ENCODE measurements at regions of chr9 and their contacts with region 1.

Region 1: GRCh38 chr9:38445154-38446043 is 21.1 kb upstream of the IGFBPL1 start:
- DNase-seq: peak in 1 of 2 donors; percentile 79
- H3K4me3 ChIP-seq: no peak overlapping the region
- H3K27ac ChIP-seq: no peak overlapping the region
- H3K4me1 ChIP-seq: no peaks in the 10 kb centered on the region
- H3K27me3 ChIP-seq: no peaks in the 10 kb centered on the region
- CTCF ChIP-seq: no peak
- POLR2A ChIP-seq: no peak

Region 2: DNA sequence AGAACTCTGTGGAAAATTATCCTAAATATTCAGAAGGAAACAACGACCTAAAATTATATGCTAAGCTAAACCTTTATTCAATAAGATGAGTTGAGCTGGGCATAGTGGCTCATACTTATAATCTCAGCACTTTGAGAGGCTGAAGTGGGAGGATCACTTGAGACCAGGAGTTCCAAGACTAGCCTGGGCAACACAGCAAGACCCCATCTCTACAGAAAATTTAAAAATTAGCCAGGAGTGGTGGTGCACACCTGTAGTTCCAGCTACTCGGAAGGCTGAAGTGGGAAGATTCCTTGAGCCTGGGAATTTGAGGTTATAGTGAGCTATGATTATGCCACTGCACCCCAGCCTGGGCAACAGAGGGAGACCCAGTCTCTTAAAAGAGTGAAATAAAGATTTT is 593.2 kb before region 1 on chr9:
- intact Hi-C with region 1: no loop called
- DNase-seq: no peak
- H3K4me3 ChIP-seq: no peak overlapping the region
- H3K27ac ChIP-seq: no peak overlapping the region
- H3K4me1 ChIP-seq: no peaks in the 10 kb centered on the region
- H3K27me3 ChIP-seq: no peaks in the 10 kb centered on the region
- CTCF ChIP-seq: no peak
- POLR2A ChIP-seq: no peak

Region 3: GRCh38 chr9:38008168-38009034 is 437.0 kb before region 1 on chr9:
- intact Hi-C with region 1: no loop called
- DNase-seq: no peak
- H3K4me3 ChIP-seq: no peak overlapping the region
- H3K27ac ChIP-seq: no peak overlapping the region
- H3K4me1 ChIP-seq: peaks cover 43% of the 10 kb centered on the region
- H3K27me3 ChIP-seq: no peaks in the 10 kb centered on the region
- CTCF ChIP-seq: no peak
- POLR2A ChIP-seq: no peak

Region 4: DNA sequence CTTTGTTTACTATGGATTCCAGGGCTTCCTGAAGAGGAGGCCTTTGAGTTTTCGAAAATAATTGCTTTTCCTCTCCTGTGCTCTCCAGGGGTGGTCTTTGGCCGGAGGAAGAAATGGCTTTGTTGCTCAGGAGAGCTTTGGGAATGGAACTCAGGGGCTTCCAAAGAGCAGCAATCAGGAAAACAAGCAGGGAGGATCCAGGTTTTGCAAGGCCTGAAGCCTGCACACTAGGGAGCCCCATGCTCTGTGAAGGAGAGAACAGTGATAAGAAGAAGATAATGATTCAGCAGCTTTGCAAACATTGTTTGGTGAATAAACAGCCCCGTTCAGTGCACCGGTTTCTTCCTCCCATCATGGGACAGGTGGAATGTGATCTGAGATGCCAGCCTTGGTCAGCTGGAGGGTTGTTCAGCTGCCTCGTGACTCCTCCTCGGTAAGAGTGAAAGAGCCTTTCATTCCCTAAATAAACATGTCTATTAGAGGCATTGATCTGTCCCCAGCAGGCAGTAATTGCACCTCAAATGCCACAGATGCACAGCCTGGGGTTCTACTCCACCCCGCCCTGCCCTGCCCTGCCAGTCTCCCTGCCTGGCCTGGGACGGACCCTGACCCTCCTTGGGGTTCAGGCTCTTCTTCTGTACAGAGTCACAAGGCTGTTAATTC is 64.4 kb before region 1 on chr9:
- intact Hi-C with region 1: no loop called
- DNase-seq: no peak
- H3K4me3 ChIP-seq: no peak overlapping the region
- H3K27ac ChIP-seq: no peak overlapping the region
- H3K4me1 ChIP-seq: no peaks in the 10 kb centered on the region
- H3K27me3 ChIP-seq: no peaks in the 10 kb centered on the region
- CTCF ChIP-seq: no peak
- POLR2A ChIP-seq: no peak

Region 5: GRCh38 chr9:38432922-38433510 is 12.4 kb before region 1 on chr9:
- intact Hi-C with region 1: no loop called
- DNase-seq: peak in 1 of 2 donors; percentile 44
- H3K4me3 ChIP-seq: no peak overlapping the region
- H3K27ac ChIP-seq: no peak overlapping the region
- H3K4me1 ChIP-seq: no peaks in the 10 kb centered on the region
- H3K27me3 ChIP-seq: no peaks in the 10 kb centered on the region
- CTCF ChIP-seq: peak in 1 of 3 experiments; percentile 29
- POLR2A ChIP-seq: no peak

Region 6: DNA sequence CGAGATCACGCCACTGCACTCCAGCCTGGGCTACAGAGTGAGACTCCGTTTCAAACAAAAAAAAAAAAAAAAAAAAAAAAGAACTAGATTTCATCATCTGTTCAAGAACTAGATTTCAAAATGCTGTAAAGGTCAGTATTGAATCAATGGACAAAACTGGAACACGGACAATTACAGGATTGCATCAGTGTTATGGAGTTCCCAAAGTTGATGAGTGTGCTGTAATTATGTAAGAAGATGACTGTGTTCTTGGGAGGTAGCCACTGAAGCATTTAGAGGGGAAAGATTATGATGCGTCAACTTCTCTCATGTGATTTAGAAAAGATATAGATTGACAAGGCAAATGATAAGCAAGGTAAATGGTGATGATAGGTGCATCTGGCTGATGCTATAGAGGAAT is 268.0 kb after region 1 on chr9:
- intact Hi-C with region 1: loop called (anchors 10 kb)
- DNase-seq: no peak
- H3K4me3 ChIP-seq: no peak overlapping the region
- H3K27ac ChIP-seq: peak overlapping the region; percentile 42
- H3K4me1 ChIP-seq: no peaks in the 10 kb centered on the region
- H3K27me3 ChIP-seq: no peaks in the 10 kb centered on the region
- CTCF ChIP-seq: no peak
- POLR2A ChIP-seq: no peak